HEK293 (cell line): ENCODE measurements at regions of chr9 and their contacts with region 1.

Region 1: DNA sequence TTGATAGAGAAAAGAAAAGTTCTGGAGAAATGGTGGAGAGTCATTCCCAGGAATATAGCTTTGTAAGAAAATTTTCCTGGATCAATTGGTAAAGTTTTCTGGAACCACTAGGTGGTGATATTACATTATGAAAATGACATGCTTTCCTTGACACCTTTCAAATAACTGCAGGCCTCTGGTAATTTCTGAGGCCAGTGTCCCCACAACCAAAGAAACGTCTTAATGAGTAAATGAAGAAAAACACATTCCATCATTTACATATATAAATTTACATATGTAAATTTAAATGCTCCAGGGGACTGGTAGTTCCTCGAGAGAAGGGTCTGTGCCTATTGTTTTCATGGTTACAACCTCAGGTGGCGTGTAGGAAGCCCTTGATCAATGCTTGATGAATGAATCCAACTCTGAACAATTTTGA is 17.2 kb upstream of the RGS3 start:
- H3K4me3 ChIP-seq: no peak overlapping the region
- H3K27ac ChIP-seq: no peak overlapping the region
- H3K4me1 ChIP-seq: no peaks in the 10 kb centered on the region
- CTCF ChIP-seq: no peak

Region 2: DNA sequence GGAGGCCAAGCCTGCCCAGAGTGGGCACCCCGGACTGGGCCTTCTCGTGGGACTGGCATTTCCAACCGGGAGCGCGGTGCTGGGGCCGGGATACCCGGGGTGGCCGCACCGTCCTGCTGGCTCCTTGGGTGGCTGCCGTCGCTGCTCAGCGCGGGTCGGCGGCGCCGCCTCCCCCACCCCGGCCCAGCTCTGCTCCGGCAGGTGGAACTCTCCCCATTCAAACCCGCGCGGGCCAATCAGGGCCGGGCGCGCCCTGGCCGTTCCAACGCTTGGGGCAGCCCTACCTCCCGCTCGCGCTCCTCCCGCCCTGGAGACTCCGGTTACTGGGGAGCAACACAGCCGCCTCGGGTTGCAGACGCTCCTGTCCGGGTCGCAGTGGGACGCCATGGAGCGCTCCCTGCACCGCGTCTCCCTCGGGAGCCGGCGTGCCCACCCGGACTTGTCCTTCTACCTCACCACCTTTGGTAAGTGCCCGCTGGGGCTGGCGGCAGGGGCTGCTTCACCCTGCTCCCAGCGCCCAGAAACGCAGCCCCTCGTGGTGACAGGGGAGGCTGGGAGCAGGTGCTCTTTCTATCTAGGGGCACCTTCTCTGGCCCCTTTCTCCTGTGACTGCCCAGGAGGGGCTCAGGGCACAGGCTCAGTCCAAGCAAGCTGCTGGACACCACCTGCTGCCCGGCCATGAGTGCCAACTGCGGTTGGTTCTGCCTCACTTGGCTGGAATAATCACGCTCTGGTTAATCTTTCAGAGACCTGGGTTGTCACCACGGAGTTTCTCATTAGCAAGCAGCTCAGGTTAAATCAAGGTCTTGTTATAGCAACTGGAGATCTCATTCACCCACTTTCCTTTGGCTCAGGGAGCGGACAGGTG is 17.3 kb after region 1 on chr9 and contains the start of gene RGS3:
- CTCF ChIA-PET with region 1: interaction called, 10 read pairs
- POLR2A ChIA-PET with region 1: no interaction called
- H3K4me3 ChIP-seq: peak within 1 kb of the TSS; percentile 40
- H3K27ac ChIP-seq: peak within 1 kb of the TSS; percentile 60; the same call in 1 of the 2 replicates
- H3K4me1 ChIP-seq: peaks cover 10% of the 10 kb centered on the region
- CTCF ChIP-seq: peak; percentile 49; the same call in 1 of the 2 replicates

Region 3: DNA sequence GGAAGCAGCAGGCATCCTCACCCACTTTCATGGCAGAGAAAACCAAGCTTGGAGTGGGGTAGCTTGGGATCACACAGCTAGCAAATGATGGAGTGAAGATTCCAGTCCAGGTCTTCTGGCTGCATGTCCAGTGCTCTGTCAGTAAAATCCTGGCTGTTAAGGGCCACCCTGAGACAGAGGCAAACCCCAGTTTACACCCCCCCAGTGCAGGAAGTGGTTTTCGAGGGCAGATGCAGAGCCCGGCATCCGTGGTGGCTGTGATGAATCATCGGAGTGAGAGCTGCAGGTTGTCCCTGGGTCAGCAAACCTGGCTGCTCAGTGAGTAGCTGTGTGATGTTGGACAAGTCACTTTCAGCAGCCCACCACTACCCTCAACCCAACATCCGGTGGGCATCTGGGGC is 132.6 kb after region 1 on chr9:
- CTCF ChIA-PET with region 1: interaction called, 23 read pairs
- POLR2A ChIA-PET with region 1: no interaction called
- H3K4me3 ChIP-seq: no peak overlapping the region
- H3K27ac ChIP-seq: no peak overlapping the region
- H3K4me1 ChIP-seq: no peaks in the 10 kb centered on the region
- CTCF ChIP-seq: no peak